ENCODE measurements at regions of chr3 and their contacts with region 1.

Region 1: GRCh38 chr3:118884748-118885206 is 149.9 kb downstream of the IGSF11 start:
- DNase-seq: peak; percentile 74 to 93 (median 88)
- ATAC-seq: peak; percentile 87 to 89
- H3K4me3 ChIP-seq: no peak overlapping the region
- H3K27ac ChIP-seq: no peak overlapping the region
- H3K4me1 ChIP-seq: no peaks in the 10 kb centered on the region
- H3K27me3 ChIP-seq: no peaks in the 10 kb centered on the region

Region 2: GRCh38 chr3:119034256-119035013 is 149.7 kb after region 1 on chr3 and contains the start of gene IGSF11:
- intact Hi-C with region 1: loop called (anchors 2 to 5 kb)
- DNase-seq: peak; percentile 69 to 91 (median 88)
- ATAC-seq: peak; percentile 97
- H3K4me3 ChIP-seq: peak within 1 kb of the TSS; percentile 40
- H3K27ac ChIP-seq: no peak within 1 kb of the TSS
- H3K4me1 ChIP-seq: no peaks in the 10 kb centered on the region
- H3K27me3 ChIP-seq: no peaks in the 10 kb centered on the region
- total RNA-seq, gene IGSF11: 3.6 to 9.3 (median 5.5) TPM

Region 3: GRCh38 chr3:119098619-119099222 is 213.9 kb after region 1 on chr3:
- intact Hi-C with region 1: loop called (anchors 2 to 5 kb)
- DNase-seq: no peak
- ATAC-seq: no peak
- H3K4me3 ChIP-seq: no peak overlapping the region
- H3K27ac ChIP-seq: no peak overlapping the region
- H3K4me1 ChIP-seq: no peaks in the 10 kb centered on the region
- H3K27me3 ChIP-seq: no peaks in the 10 kb centered on the region

Measured in right cardiac atrium (tissue), 5 donors.